Pancreas (tissue), 10 donors: ENCODE measurements at regions of chr5 and their contacts with region 1.

Region 1: DNA sequence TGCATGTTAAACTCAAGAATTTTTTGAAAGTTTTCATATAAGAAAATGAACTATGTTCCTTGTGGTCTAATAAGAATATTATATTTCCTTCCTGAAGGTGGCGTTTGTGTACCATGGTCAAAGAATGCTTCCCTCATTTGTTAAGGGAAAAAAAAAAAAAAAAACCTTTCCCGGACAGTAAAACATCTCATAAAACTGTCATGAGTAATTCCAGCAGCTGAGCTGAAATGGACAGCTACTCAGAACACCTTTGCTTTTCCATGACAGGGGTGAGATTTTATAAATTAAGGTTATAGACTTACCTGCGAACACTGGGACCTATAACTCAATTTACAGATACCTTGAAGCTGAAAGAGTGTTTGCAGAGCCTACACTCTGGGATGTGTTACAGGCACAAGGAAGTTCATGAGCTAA is 113.2 kb upstream of the RANBP3L start:
- DNase-seq: no peak
- ATAC-seq: peak in 3 of 4 donors; percentile 70 to 75 (median 70)
- H3K4me3 ChIP-seq: no peak overlapping the region
- H3K27ac ChIP-seq: no peak overlapping the region
- H3K4me1 ChIP-seq: no peaks in the 10 kb centered on the region
- H3K27me3 ChIP-seq: no peaks in the 10 kb centered on the region
- CTCF ChIP-seq: peak in 1 of 4 donors; percentile 41

Region 2: GRCh38 chr5:36492998-36493655 is 78.3 kb after region 1 on chr5:
- intact Hi-C with region 1: no loop called
- DNase-seq: no peak
- ATAC-seq: no peak
- H3K4me3 ChIP-seq: no peak overlapping the region
- H3K27ac ChIP-seq: no peak overlapping the region
- H3K4me1 ChIP-seq: no peaks in the 10 kb centered on the region
- H3K27me3 ChIP-seq: peaks cover 0 to 2% (median 0%) of the 10 kb centered on the region in 4 donors
- CTCF ChIP-seq: no peak

Region 3: GRCh38 chr5:36507332-36507952 is 92.6 kb after region 1 on chr5:
- intact Hi-C with region 1: loop called in 2 of 3 experiments (anchors 5 to 10 kb)
- DNase-seq: peak; percentile 43 to 91 (median 72)
- ATAC-seq: peak; percentile 46 to 87 (median 80)
- H3K4me3 ChIP-seq: no peak overlapping the region
- H3K27ac ChIP-seq: no peak overlapping the region
- H3K4me1 ChIP-seq: peaks cover 0 to 4% (median 4%) of the 10 kb centered on the region in 3 donors
- H3K27me3 ChIP-seq: no peaks in the 10 kb centered on the region
- CTCF ChIP-seq: peak; percentile 37 to 84 (median 76)

Region 4: DNA sequence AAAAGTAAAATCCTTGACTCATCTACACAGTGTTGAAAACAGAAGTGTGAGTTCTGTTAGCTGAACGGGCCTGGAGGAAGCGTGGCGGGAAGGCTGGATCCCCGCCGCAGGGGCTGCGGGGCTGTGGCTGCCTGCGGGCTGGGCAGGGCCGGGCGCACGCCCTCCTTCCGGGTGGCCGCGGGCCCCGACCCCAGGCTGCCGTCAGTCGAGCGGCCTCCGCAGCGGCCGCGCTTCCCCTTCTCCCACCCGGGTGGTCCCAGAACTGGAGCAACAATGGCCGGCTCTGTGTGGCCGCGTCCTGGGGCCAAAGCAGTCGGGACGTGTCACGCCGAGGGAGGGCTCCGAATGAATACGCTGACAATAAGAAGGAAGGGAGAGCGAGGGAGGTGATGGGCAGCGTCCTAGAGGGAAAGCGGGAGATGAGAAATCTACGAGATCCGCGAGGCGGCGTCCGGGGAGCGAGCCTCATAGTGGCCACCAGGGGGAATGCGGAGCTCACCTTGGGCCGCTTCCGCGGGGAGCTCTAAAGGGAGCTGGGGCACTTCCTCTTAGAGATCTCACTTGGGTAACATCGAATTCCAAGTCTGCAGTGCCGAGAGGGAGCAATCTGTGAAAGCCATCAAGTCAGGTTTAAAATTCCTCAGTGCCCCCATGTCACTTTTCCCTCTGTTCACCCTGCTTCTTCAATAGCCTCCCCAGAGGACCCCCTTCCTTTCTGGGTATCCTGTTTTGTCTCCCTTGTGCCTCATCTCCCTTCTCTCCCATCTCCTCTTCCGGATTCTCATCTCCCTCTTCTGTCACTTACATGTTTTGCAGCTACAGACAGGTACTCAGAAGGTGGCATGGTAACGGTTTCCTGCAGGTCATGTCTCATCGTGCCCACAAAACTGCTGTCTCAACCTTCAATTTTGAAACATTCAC is 275.4 kb after region 1 on chr5:
- intact Hi-C with region 1: loop called in 2 of 3 experiments (anchors 5 kb)
- DNase-seq: peak; percentile 62 to 92 (median 78)
- ATAC-seq: peak; percentile 86 to 94 (median 88)
- H3K4me3 ChIP-seq: peak overlapping the region; percentile 2 to 50 (median 26)
- H3K27ac ChIP-seq: peak overlapping the region in 3 of 4 donors; percentile 33 to 75 (median 72)
- H3K4me1 ChIP-seq: no peaks in the 10 kb centered on the region
- H3K27me3 ChIP-seq: no peaks in the 10 kb centered on the region
- CTCF ChIP-seq: peak; percentile 67 to 82 (median 78)

Region 5: DNA sequence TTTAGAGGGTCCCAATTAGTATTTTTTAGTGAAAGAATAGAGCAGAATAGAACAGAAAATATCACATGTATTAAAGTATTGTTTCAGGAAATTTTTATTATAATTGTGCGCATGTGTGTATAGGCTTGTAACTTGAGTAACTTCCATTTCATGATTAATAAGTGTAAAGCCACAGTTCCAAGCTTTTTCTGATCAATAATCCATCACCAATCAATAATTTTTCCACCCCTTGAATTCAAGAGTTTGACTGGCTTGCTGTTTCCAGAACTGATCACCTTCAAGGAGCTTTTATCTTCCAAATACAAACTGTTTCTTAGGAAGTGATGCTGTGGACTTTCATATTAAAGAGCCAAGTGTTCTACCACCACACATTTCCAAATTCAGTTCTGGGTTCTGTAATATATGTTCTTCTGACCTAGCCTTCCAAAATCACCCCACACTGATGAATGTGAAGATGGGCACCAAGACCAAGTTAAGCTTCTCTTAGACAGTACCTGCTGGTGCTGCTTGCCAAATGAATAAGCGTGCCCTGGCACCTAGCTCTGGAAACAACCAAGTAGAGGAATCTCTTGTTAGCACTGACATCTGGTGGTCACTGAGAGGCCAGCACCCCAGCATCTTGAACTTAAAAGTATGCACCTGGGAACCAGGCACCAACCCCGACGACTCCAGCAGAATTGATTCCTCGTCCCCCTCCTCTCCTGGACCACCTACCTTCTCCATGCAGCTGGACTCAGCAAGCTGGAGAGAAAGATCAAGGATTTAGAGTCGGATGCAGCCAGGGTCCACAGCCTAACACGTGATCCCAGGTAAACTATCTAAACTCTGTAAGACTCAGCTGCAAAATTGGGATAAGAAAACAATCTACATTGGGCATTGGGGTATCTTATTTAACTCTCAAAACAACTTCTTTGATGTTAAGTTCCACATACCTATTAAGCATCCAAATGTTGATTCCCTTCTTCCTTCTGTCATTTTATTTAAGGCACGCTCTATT is 281.1 kb after region 1 on chr5:
- intact Hi-C with region 1: loop called in 2 of 3 experiments (anchors 5 kb)
- DNase-seq: peak; percentile 31 to 67 (median 52)
- ATAC-seq: peak; percentile 54 to 82 (median 74)
- H3K4me3 ChIP-seq: no peak overlapping the region
- H3K27ac ChIP-seq: no peak overlapping the region
- H3K4me1 ChIP-seq: no peaks in the 10 kb centered on the region
- H3K27me3 ChIP-seq: no peaks in the 10 kb centered on the region
- CTCF ChIP-seq: peak in 3 of 4 donors; percentile 51 to 57 (median 53)

Region 6: DNA sequence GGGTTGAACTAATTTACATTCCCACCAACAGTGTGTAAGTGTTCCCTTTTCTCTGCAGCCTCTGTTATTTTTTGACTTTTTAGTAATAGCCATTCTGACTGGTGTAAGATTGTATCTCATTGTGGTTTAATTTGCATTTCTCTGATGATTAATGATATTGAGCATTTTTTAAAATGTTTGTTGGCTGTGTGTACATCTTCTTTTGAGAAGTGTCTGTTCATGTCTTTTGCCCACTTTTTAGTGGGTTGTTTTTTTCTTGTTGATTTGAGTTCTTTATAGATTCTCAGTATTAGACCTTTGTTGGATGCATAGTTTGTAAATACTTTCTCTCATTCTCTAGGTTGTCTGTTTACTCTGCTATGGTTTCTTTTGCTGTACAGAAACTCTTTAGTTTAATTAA is 563.3 kb after region 1 on chr5:
- intact Hi-C with region 1: no loop called
- DNase-seq: no peak
- ATAC-seq: no peak
- H3K4me3 ChIP-seq: no peak overlapping the region
- H3K27ac ChIP-seq: no peak overlapping the region
- H3K4me1 ChIP-seq: peaks cover 0 to 3% (median 0%) of the 10 kb centered on the region in 3 donors
- H3K27me3 ChIP-seq: no peaks in the 10 kb centered on the region
- CTCF ChIP-seq: no peak